Mammary epithelial cell (primary cell): ENCODE measurements at regions of chr4 and their contacts with region 1.

Region 1: GRCh38 chr4:74098450-74098994 is 473 bp downstream of the CXCL2 start:
- DNase-seq: no peak
- H3K4me3 ChIP-seq: peak overlapping the region; percentile 71 to 88 (median 85)
- H3K27ac ChIP-seq: peak overlapping the region; percentile 94
- H3K4me1 ChIP-seq: peaks cover 17% of the 10 kb centered on the region
- H3K27me3 ChIP-seq: no peaks in the 10 kb centered on the region
- CTCF ChIP-seq: no peak

Region 2: GRCh38 chr4:74109116-74109869 is 10.8 kb after region 1 on chr4:
- CTCF ChIA-PET with region 1: interaction called, 5 read pairs
- dilution Hi-C with region 1: no loop called
- in situ Hi-C with region 1: no loop called
- intact Hi-C with region 1: loop called (anchors 1 kb)
- DNase-seq: peak; percentile 98
- H3K4me3 ChIP-seq: peak overlapping the region in 2 of 3 experiments; percentile 5 to 15
- H3K27ac ChIP-seq: peak overlapping the region; percentile 99
- H3K4me1 ChIP-seq: peaks cover 65% of the 10 kb centered on the region
- H3K27me3 ChIP-seq: no peaks in the 10 kb centered on the region
- CTCF ChIP-seq: no peak

Region 3: GRCh38 chr4:74267998-74268606 is 169.6 kb after region 1 on chr4:
- CTCF ChIA-PET with region 1: no interaction called
- dilution Hi-C with region 1: no loop called
- in situ Hi-C with region 1: no loop called
- intact Hi-C with region 1: no loop called
- DNase-seq: peak; percentile 83
- H3K4me3 ChIP-seq: no peak overlapping the region
- H3K27ac ChIP-seq: peak overlapping the region; percentile 68
- H3K4me1 ChIP-seq: peaks cover 22% of the 10 kb centered on the region
- H3K27me3 ChIP-seq: no peaks in the 10 kb centered on the region
- CTCF ChIP-seq: no peak